Activated CD4-positive, alpha-beta memory T cell treated with anti-CD3 and anti-CD28 coated beads for 36 hours (primary cell): ENCODE measurements at regions of chr15 and their contacts with region 1.

Region 1: DNA sequence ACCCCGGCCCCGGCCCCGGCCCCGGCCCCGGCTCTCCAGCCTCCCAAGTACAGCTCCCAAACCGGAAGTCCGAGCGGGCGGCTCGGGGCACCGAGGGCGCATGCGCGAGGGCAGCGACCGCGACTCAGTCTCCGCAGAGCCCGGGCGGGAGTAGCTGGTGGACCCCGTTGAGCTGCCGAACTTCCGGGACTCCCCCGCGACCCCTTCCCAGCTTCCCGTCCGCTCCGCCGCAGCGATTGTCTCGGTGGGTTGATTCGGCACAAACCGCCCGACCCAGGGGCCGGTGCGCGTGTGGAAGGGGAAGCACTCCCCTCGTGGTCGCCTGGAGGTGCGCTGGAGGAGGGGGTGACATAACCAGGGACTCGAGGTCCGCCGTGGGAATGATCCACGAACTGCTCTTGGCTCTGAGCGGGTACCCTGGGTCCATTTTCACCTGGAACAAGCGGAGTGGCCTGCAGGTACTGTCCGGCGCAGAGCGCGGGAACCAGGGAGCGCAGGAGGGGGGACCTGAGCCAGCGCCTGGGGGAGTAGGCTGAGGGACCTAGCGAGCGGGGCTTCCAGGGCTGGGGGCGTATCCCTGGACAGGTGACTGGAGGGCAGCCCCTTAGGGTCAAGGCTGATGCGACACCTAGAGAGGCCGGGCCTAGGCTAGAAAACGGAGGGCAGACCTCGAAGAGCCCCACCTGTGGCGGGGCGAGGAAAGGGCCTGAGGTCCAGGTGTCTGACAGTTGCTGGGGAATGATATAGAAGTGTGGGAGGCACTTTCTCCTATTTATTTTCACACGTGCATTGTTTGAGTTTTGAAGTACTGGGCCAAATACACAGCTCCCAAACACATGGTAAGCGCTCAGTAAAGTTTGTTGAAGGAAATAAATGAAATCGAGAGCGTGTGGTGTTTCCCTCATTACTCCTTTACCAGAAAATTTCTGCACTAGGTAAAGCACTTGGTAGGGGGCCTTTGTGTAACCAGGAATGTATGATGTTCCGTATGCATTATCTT is at the starts of genes TUBGCP4 and ZSCAN29:
- DNase-seq: peak; percentile 86
- H3K4me3 Mint-ChIP-seq: peak within 1 kb of the TSS; percentile 90
- H3K27ac Mint-ChIP-seq: peak within 1 kb of the TSS; percentile 75
- H3K4me1 Mint-ChIP-seq: peaks cover 51% of the 10 kb centered on the region
- H3K27me3 Mint-ChIP-seq: no peaks in the 10 kb centered on the region
- total RNA-seq, gene TUBGCP4: 37.3 to 37.6 TPM
- total RNA-seq, gene ZSCAN29: 20.6 to 20.9 TPM

Region 2: DNA sequence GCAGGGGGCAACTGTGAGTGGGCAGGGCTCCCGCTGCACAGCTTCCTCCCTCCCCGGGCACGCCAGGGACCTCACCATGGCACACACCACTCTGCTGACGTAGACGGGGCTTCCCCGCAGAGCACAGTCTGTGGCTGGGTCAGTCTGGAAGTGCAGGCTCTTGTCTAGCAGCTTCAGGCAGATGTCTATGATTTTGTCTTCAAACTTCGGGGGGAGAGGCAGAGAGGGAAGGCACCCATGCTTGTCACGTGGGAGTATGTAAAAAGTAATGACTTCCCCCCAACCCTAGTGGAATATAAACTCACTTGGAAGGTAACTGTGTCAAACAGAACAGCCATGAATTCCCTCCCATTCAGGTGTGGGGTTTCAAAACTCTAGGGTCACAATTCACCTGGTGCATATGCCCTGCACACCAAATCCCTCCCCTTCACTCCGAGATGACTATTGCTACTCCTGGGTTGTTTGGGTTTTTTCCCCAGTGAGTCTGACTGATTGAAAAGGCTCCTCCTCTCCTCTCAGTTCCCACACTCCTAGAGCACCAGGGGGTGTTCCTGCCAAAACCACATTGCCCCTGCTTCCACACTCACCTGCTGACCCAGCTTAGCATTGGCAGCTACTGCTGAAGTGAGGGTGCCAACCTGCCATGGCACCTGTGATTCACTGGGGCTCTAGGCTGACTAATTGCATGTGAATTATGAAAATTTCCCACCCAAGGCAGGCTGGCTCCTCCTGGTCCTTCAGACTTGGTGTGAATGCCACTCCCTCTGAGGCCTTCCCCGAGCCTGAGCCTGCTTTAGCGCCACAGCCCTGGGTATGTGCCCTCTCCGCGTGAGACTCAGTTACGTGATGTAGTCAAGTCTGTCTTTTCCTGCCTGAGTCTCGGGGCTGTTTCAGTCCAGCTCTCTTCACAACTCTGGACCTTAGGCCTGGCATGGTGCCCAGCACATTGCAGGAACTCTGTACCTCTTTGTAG is 117.6 kb before region 1 on chr15:
- CTCF ChIA-PET with region 1: no interaction called
- POLR2A ChIA-PET with region 1: no interaction called
- intact Hi-C with region 1: no loop called
- DNase-seq: peak; percentile 58
- H3K4me3 Mint-ChIP-seq: no peak overlapping the region
- H3K27ac Mint-ChIP-seq: no peak overlapping the region
- H3K4me1 Mint-ChIP-seq: peaks cover 20% of the 10 kb centered on the region
- H3K27me3 Mint-ChIP-seq: peaks cover 7% of the 10 kb centered on the region

Region 3: GRCh38 chr15:43329960-43330779 is 41.1 kb before region 1 on chr15 and contains the start of gene LCMT2:
- CTCF ChIA-PET with region 1: interaction called, 4 read pairs
- POLR2A ChIA-PET with region 1: interaction called, 6 read pairs
- intact Hi-C with region 1: loop called (anchors 1 kb)
- DNase-seq: peak; percentile 94
- H3K4me3 Mint-ChIP-seq: peak within 1 kb of the TSS; percentile 92
- H3K27ac Mint-ChIP-seq: peak within 1 kb of the TSS; percentile 99
- H3K4me1 Mint-ChIP-seq: peaks cover 41% of the 10 kb centered on the region
- H3K27me3 Mint-ChIP-seq: no peaks in the 10 kb centered on the region
- total RNA-seq, gene LCMT2: 7.7 to 9.1 TPM

Region 4: DNA sequence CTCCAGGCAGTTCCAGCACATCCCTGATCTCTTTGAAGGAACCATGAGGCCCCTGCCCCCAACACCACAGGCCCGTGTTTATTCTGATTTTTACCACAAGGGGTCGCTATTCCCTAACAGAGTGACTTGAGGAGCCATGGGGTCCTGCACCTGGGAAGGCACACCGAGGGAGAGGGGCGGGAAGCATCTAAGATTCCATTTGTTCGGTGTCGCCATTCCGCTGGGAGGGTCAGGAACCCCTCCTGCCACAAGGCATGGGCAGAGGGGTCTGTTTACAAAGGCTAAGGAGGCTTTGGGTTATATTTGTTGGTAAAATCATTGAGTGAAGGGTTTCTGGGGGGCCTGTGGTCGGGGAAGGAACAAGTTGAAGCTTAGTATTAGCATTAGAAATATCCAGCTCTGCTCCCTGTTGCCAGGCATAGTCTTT is 532.6 kb after region 1 on chr15:
- CTCF ChIA-PET with region 1: no interaction called
- POLR2A ChIA-PET with region 1: no interaction called
- intact Hi-C with region 1: no loop called
- DNase-seq: peak; percentile 59
- H3K4me3 Mint-ChIP-seq: no peak overlapping the region
- H3K27ac Mint-ChIP-seq: no peak overlapping the region
- H3K4me1 Mint-ChIP-seq: peaks cover 2% of the 10 kb centered on the region
- H3K27me3 Mint-ChIP-seq: no peaks in the 10 kb centered on the region